Activated CD8-positive, alpha-beta T cell treated with anti-CD3 and anti-CD28 coated beads, Interleukin-2, amount 10 ng/mL, durations not matched to agents 7 days and 5 days (primary cell): ENCODE measurements at regions of chr2 and their contacts with region 1.

Region 1: DNA sequence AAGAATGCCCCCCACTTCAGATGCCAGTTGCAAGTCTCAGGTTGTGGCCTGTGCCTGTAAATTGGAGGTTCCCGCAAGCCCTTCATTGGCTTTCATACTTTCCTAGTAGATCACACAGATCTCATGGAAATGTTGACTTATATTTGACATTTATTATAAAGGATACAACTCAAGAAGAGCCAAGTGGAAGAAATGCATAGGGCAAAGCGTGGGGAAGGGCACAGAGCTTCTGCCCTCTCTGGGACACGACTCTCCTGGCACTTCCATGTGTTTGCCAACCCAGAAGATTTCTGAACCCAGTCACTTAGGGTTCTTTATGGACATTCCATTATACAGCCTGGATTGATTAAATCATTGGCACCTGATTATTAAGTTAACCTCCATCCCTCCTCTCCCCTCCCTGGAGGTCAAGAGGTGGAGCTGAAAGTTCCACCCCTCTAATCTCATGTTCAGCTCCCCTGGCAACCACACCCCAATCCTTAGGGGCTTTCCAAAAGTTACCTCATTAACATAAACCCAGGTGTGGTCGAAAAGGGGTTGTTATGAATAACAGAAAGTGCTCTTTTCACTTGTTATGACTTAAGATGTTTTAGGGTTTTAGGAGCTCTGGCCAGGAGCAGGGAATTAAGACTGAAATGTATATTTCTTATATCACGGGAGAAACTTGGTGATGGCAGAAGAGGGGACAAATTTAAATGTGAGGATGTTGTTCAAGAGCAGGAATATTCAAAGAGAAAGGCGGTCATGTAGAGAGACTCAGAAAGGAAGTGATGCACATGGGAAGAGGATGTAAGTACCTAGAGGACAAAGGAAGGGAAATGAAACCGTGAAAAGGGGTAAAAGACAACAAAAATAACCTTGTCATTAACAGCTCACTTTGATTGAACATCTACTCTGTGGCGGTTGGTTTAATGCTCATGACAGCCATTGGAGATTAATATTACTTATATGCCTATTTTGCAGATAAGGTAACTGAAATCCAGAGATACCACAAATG is 31.8 kb downstream of the SP100 start:
- DNase-seq: peak; percentile 43
- ATAC-seq: peak; percentile 69
- H3K4me3 Mint-ChIP-seq: peak overlapping the region; percentile 24
- H3K27ac Mint-ChIP-seq: peak overlapping the region; percentile 87
- H3K4me1 Mint-ChIP-seq: peaks cover 74% of the 10 kb centered on the region
- H3K27me3 Mint-ChIP-seq: no peaks in the 10 kb centered on the region

Region 2: DNA sequence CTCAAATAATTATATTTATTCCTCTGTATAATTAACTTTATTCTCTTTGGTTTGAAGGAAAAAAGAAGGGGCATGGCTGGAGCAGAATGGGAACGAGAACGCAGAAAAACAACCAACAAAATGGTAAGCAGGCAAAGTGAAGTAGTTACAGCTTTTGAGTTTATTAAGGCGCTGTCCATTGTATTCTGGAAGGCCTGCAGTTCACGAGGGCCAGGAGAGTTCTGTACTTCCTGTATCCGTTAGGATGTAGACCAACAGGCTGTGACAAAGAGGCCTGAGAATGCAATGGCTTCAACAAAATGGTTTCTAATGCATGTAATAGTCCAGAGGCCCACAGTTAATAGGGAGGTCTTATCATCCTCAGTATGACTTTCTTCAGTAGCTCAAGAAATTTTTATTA is 64.3 kb before region 1 on chr2:
- CTCF ChIA-PET with region 1: no interaction called
- POLR2A ChIA-PET with region 1: no interaction called
- DNase-seq: no peak
- ATAC-seq: no peak
- H3K4me3 Mint-ChIP-seq: no peak overlapping the region
- H3K27ac Mint-ChIP-seq: no peak overlapping the region
- H3K4me1 Mint-ChIP-seq: peaks cover 2% of the 10 kb centered on the region
- H3K27me3 Mint-ChIP-seq: no peaks in the 10 kb centered on the region

Region 3: DNA sequence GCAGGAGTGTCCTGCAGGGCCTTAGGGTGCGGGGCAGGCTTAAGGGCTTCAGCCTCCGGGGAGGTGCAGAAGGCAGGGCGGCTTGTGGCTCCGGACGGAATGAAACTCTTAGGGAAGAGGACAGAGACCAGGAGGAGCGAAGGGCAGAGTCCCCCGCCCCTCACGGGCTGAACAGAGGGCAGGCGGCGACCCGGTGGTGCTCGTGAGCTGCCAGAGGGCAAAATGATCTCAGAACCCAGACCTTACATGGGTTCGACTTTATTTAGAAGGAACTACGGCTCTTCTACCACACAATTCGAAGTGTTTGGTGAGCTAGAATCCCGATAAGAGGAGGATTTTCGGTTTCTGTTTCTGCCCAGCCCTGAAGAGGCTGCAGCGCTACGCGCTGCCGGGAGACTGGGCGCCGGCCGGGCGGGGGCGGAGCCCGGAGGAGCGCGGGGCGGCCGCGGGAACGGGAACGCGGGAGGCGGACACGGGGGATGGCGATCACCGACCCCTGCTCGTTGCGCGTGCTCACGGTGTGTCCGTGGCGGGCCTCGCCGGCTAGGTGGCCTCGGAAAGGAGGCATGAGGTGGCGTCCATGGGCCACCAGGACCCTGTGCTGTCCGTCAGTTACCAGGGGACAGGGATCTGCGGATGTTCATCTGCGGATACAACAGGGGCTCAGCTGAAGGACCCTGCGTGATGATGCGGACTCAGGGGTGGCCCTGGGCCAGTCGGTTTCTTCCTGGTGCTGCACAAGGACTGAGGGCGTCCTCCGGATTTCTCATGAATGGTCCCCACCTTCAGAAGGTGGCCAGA is 36.0 kb before region 1 on chr2:
- CTCF ChIA-PET with region 1: no interaction called
- POLR2A ChIA-PET with region 1: interaction called, 13 read pairs
- DNase-seq: peak; percentile 72
- ATAC-seq: peak; percentile 79
- H3K4me3 Mint-ChIP-seq: peak overlapping the region; percentile 99
- H3K27ac Mint-ChIP-seq: peak overlapping the region; percentile 100
- H3K4me1 Mint-ChIP-seq: peaks cover 82% of the 10 kb centered on the region
- H3K27me3 Mint-ChIP-seq: no peaks in the 10 kb centered on the region